Activated T-helper 1 cell treated with anti-CD3 and anti-CD28 coated beads, Interleukin-12 subunit alpha, Interleukin-12 subunit beta, Interleukin-2, Interleukin-4 antibody, amounts not matched to agents 30 ng/mL and 10 ng/mL and 1 ng/mL, durations not matched to agents 14 hours and 24 hours and 36 hours (primary cell): ENCODE measurements at regions of chr19 and their contacts with region 1.

Region 1: DNA sequence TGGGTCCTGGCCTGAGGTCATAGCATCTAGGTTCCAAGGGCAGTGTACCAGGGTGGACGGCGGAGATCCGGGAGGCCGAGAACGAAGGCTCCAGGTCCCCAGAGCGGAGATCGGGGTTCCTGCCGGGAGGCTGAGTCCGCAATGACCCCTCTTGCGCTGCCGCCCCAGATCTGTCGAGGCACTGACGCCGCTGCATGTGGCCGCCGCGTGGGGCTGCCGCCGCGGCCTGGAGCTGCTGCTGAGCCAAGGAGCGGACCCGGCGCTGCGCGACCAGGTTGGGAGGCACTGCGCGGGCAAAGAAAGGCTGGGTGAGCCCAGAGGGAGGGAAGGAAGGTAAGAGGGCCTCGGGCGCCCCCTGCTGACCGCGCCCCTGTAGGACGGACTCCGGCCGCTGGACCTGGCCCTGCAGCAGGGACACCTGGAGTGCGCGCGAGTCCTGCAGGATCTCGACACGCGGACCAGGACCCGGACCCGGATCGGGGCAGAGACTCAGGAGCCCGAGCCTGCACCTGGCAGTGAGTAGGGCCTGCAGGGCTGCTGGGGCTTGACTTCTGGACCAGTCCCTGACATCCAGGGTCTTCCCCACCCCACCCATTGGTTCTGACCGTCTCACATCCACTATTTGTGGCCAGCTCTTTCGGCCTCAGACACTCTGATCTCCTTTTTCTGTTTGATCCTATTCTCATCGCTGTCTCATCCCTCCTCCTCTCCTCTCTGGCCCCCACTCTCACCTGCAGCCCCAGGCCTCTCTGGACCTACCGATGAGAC is 971 bp downstream of the ANKLE1 start:
- DNase-seq: peak; percentile 72
- H3K4me3 Mint-ChIP-seq: peak overlapping the region; percentile 89
- H3K27ac Mint-ChIP-seq: peak overlapping the region; percentile 58
- H3K4me1 Mint-ChIP-seq: peaks cover 4% of the 10 kb centered on the region
- H3K27me3 Mint-ChIP-seq: no peaks in the 10 kb centered on the region

Region 2: DNA sequence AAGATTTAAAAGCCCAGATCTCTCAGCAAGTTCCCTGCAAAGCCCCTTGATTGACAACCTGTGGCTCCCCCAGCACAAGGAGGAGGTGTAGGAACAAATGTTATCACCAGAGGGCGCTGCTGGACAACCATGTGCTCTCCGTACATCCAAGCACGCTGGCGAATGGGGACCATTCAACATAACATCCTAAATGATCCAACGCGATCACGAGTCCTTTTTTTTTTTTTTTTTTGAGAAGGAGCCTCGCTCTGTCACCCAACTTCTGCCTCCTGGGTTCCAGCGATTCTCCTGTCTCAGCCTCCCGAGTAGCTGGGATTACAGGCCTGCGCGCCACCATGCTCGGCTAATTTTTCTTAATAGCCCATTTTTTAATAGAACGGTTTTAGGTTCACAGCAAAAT is 511.1 kb before region 1 on chr19:
- intact Hi-C with region 1: loop called (anchors 1 kb)
- DNase-seq: peak; percentile 54
- H3K4me3 Mint-ChIP-seq: no peak overlapping the region
- H3K27ac Mint-ChIP-seq: no peak overlapping the region
- H3K4me1 Mint-ChIP-seq: no peaks in the 10 kb centered on the region
- H3K27me3 Mint-ChIP-seq: no peaks in the 10 kb centered on the region

Region 3: GRCh38 chr19:17069218-17069617 is 213.5 kb before region 1 on chr19:
- intact Hi-C with region 1: loop called (anchors 1 kb)
- DNase-seq: no peak
- H3K4me3 Mint-ChIP-seq: no peak overlapping the region
- H3K27ac Mint-ChIP-seq: no peak overlapping the region
- H3K4me1 Mint-ChIP-seq: peaks cover 50% of the 10 kb centered on the region
- H3K27me3 Mint-ChIP-seq: no peaks in the 10 kb centered on the region

Region 4: DNA sequence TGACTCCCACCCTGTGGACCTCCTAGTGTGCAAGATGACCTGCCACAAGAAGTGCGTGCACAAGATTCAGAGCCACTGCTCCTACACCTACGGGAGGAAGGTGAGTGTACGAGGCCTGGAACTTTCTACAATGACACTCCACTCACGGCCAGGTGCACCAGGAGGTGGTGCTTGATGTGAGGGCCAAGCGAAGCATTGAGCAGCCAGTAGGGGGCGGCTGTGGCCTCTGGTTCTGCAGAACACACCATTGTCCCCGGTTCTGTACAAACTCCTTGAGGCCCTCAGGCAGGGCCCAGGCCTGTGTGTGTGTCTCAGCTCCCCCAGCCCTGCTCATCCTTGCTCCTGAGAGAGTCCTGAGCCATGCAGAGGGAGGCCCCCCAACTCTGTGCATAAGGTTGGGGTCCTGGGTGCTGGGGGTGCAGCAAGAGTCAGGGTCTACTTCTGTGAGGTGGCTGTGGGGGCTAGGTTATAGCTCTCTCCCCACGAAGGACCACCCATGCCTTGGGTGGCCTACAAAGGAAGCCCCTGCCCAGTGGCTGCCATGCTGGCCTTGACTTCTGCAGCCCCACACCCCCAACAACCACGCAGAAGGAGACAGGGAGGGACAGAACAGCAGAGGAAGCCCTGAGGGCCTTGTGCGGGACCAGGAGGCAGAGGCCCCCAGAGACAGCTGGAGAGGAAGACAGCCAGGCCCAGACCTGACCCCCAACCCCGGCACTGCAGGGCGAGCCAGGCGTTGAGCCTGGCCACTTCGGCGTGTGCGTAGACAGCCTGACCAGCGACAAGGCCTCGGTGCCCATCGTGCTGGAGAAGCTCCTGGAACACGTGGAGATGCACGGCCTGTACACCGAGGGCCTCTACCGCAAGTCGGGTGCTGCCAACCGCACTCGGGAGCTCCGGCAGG is 77.2 kb before region 1 on chr19:
- intact Hi-C with region 1: loop called (anchors 1 kb)
- DNase-seq: peak; percentile 44
- H3K4me3 Mint-ChIP-seq: no peak overlapping the region
- H3K27ac Mint-ChIP-seq: no peak overlapping the region
- H3K4me1 Mint-ChIP-seq: peaks cover 8% of the 10 kb centered on the region
- H3K27me3 Mint-ChIP-seq: no peaks in the 10 kb centered on the region

Region 5: GRCh38 chr19:17260842-17261325 is 21.8 kb before region 1 on chr19:
- intact Hi-C with region 1: loop called (anchors 1 kb)
- DNase-seq: peak; percentile 80
- H3K4me3 Mint-ChIP-seq: no peak overlapping the region
- H3K27ac Mint-ChIP-seq: no peak overlapping the region
- H3K4me1 Mint-ChIP-seq: peaks cover 12% of the 10 kb centered on the region
- H3K27me3 Mint-ChIP-seq: no peaks in the 10 kb centered on the region